Activated CD8-positive, alpha-beta T cell treated with anti-CD3 and anti-CD28 coated beads for 36 hours (primary cell): ENCODE measurements at regions of chr5 and their contacts with region 1.

Region 1: GRCh38 chr5:138065102-138065501 is 18.7 kb upstream of the WNT8A start:
- DNase-seq: peak; percentile 26
- ATAC-seq: no peak
- H3K4me3 Mint-ChIP-seq: no peak overlapping the region
- H3K27ac Mint-ChIP-seq: no peak overlapping the region
- H3K4me1 Mint-ChIP-seq: no peaks in the 10 kb centered on the region
- H3K27me3 Mint-ChIP-seq: no peaks in the 10 kb centered on the region
- CTCF ChIP-seq: no peak

Region 2: DNA sequence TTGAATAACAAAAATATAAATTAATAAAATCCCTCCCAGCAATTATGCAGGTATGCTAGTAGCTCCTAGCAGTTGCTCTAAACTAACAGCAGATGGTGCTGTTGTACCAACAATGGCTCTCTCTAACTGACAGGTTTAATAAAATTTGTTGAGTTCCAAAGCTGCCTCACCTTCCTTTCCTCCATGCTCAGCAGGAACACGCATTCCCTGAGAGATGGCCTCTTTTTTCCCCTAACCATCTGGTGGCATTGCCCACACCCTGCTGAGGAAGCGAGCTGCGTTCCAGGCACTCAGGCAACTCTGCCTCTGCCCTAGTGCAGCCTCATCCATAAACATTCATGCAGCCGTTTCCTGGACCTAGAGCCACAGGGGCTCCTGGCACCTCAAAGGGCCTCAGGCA is 435.5 kb before region 1 on chr5:
- CTCF ChIA-PET with region 1: interaction called, 19 read pairs
- POLR2A ChIA-PET with region 1: no interaction called
- intact Hi-C with region 1: loop called (anchors 5 kb)
- DNase-seq: peak; percentile 8
- ATAC-seq: peak; percentile 82
- H3K4me3 Mint-ChIP-seq: no peak overlapping the region
- H3K27ac Mint-ChIP-seq: no peak overlapping the region
- H3K4me1 Mint-ChIP-seq: no peaks in the 10 kb centered on the region
- H3K27me3 Mint-ChIP-seq: no peaks in the 10 kb centered on the region
- CTCF ChIP-seq: peak; percentile 94

Region 3: DNA sequence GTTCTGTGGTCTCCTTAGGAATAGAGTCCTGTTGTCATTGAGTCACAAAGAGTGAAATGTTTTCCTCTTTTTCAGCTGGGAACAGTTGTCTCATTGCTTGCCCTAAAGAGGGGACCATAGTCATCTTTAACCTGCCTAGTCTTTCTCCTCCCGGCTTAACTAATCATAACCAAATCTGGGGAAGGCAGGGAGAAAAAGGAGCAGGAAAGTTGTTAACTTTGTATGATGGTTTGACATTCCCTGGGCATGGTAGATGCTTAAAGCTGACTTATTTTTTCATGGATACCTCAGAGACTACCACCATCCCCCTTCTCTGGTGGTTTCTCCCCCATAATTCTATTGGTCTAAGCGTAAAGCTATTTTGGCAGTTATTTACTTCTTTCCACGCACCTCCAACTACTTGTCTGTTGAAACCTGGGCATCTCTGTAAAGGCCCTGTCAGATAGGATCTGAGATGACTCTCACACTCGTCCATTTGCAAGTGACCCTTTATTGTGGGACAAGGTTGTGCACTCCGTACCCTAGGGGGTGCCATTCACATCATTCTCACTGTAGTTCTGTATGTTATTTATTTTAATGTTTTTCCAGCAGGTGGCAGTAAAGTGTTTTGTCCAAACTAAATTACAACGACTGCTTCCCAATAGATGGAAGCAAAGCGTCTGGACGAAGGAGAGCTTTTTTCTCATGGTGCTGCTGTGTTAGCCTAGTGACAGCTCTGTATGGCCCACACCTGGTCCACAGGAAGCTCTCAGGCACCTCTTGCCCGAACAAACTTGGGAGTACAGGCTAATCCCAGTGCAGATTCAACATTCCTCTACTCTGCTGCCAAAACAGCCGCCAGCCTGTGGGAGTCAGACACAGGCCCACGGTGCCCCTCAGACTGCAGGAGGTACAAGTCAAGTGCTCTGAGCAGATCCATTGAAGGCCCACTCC is 29.2 kb before region 1 on chr5:
- CTCF ChIA-PET with region 1: interaction called, 226 read pairs
- POLR2A ChIA-PET with region 1: interaction called, 4 read pairs
- intact Hi-C with region 1: loop called (anchors 1 kb)
- DNase-seq: peak; percentile 81
- ATAC-seq: peak; percentile 67
- H3K4me3 Mint-ChIP-seq: no peak overlapping the region
- H3K27ac Mint-ChIP-seq: peak overlapping the region; percentile 6
- H3K4me1 Mint-ChIP-seq: peaks cover 27% of the 10 kb centered on the region
- H3K27me3 Mint-ChIP-seq: no peaks in the 10 kb centered on the region
- CTCF ChIP-seq: peak; percentile 88

Region 4: GRCh38 chr5:138077065-138077696 is 12.1 kb after region 1 on chr5:
- CTCF ChIA-PET with region 1: interaction called, 33 read pairs
- POLR2A ChIA-PET with region 1: no interaction called
- intact Hi-C with region 1: no loop called
- DNase-seq: peak; percentile 74
- ATAC-seq: peak; percentile 31
- H3K4me3 Mint-ChIP-seq: no peak overlapping the region
- H3K27ac Mint-ChIP-seq: no peak overlapping the region
- H3K4me1 Mint-ChIP-seq: peaks cover 14% of the 10 kb centered on the region
- H3K27me3 Mint-ChIP-seq: no peaks in the 10 kb centered on the region
- CTCF ChIP-seq: peak; percentile 98

Region 5: GRCh38 chr5:138095100-138095907 is 30.2 kb after region 1 on chr5:
- CTCF ChIA-PET with region 1: interaction called, 11 read pairs
- POLR2A ChIA-PET with region 1: no interaction called
- intact Hi-C with region 1: no loop called
- DNase-seq: no peak
- ATAC-seq: no peak
- H3K4me3 Mint-ChIP-seq: no peak overlapping the region
- H3K27ac Mint-ChIP-seq: no peak overlapping the region
- H3K4me1 Mint-ChIP-seq: peaks cover 25% of the 10 kb centered on the region
- H3K27me3 Mint-ChIP-seq: peaks cover 6% of the 10 kb centered on the region
- CTCF ChIP-seq: no peak